ENCODE measurements at regions of chr17 and their contacts with region 1.

Region 1: GRCh38 chr17:44235583-44235936 is 16.1 kb upstream of the UBTF start:
- DNase-seq: peak; percentile 91
- H3K4me3 ChIP-seq: no peak overlapping the region
- H3K27ac ChIP-seq: peak overlapping the region; percentile 55
- H3K4me1 ChIP-seq: peaks cover 22% of the 10 kb centered on the region
- H3K27me3 ChIP-seq: no peaks in the 10 kb centered on the region
- CTCF ChIP-seq: no peak

Region 2: GRCh38 chr17:44269535-44270240 is 34.1 kb after region 1 on chr17:
- CTCF ChIA-PET with region 1: no interaction called
- dilution Hi-C with region 1: loop called (anchors 5 kb)
- in situ Hi-C with region 1: no loop called
- intact Hi-C with region 1: no loop called
- DNase-seq: no peak
- H3K4me3 ChIP-seq: no peak overlapping the region
- H3K27ac ChIP-seq: no peak overlapping the region
- H3K4me1 ChIP-seq: no peaks in the 10 kb centered on the region
- H3K27me3 ChIP-seq: no peaks in the 10 kb centered on the region
- CTCF ChIP-seq: no peak

Region 3: GRCh38 chr17:44878627-44879221 is 643.2 kb after region 1 on chr17:
- CTCF ChIA-PET with region 1: no interaction called
- dilution Hi-C with region 1: no loop called
- in situ Hi-C with region 1: no loop called
- intact Hi-C with region 1: no loop called
- DNase-seq: no peak
- H3K4me3 ChIP-seq: no peak overlapping the region
- H3K27ac ChIP-seq: no peak overlapping the region
- H3K4me1 ChIP-seq: no peaks in the 10 kb centered on the region
- H3K27me3 ChIP-seq: no peaks in the 10 kb centered on the region
- CTCF ChIP-seq: peak; percentile 46 to 64

Measured in mammary epithelial cell (primary cell).